CD8-positive, alpha-beta T cell (primary cell): ENCODE measurements at regions of chr6 and their contacts with region 1.

Region 1: DNA sequence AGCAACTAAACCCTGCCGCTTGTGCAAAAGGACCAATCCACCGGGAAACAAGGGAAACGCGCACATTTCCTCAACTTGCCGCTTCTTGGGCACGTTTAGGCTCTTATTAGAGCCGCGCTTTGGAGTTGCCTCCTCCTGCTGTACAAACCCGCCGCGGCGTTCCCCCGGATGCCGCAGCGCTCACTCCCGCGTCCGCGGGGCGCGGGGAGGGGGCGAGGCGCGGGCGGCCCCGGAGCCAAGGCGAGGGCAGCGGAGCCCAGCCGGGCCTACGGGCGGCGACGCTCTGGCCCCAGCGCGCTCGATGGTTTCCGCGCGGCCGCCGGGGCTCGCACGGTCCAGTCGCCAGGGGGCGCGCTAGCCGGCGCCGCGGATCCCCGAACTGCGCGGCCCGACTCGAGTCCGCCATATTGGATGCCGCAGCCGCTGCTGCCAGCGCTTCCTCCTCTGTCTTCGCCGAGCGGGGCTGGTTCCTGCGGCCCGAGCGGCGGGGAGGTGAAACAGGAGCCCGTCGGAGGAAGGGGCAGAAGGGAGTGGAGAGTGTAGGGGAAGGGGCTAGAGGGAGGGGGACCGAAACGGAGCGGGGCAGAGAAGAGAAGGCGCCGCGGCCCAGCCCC is at the start of gene SCAF8:
- DNase-seq: peak; percentile 75 to 94 (median 86)
- ATAC-seq: peak; percentile 60
- H3K4me3 ChIP-seq: peak within 1 kb of the TSS; percentile 63 to 84
- H3K4me3 Mint-ChIP-seq: peak within 1 kb of the TSS; percentile 87
- H3K27ac ChIP-seq: peak within 1 kb of the TSS; percentile 90 to 96
- H3K27ac Mint-ChIP-seq: peak within 1 kb of the TSS; percentile 98
- H3K4me1 ChIP-seq: peaks cover 43% of the 10 kb centered on the region
- H3K4me1 Mint-ChIP-seq: peaks cover 42% of the 10 kb centered on the region
- H3K27me3 ChIP-seq: no peaks in the 10 kb centered on the region
- H3K27me3 Mint-ChIP-seq: peaks cover 2% of the 10 kb centered on the region
- CTCF ChIP-seq: peak; percentile 80
- total RNA-seq, gene SCAF8: 85.0 to 86.6 TPM

Region 2: DNA sequence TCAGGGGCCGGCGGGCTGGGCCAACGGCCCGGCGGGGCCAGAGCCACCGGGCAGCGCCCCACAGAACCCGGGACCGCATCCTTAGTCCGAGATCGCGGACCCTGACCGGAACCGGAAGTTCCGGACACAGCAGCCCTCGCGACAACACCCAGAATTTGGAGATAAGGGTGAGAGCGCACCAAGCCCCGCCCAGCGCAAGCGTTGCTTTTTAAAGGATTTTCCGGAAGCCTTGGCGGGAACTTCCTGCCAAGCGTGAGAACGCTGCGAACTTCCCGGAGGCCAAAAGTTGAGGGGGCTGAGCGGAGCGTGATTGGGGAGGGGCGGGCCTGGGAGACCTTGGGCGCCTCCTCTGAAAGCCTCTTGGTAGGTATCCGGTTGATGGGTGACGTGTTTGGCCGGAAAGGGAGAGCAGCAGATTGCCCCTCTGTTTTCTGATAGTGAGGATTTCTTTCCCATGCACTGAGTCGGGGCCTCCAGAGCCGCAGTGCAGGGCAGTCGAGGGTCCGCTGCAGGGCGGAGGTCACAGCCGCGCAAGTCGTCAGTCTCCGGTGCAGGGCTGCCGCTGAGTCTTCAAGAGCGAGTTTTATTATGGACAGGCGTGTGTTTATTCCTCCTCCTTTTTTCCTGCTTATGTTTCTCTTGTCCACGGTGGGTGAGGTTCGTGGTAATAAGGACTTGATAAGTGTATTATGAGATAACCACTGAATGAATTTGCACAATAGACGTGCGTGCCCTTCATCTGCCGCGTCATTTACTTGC is 1730.3 kb before region 1 on chr6 and contains the start of gene MTRF1L:
- CTCF ChIA-PET with region 1: no interaction called
- POLR2A ChIA-PET with region 1: no interaction called
- intact Hi-C with region 1: loop called in 1 of 2 experiments (anchors 10 kb)
- DNase-seq: peak; percentile 58 to 94 (median 84)
- ATAC-seq: peak; percentile 85
- H3K4me3 ChIP-seq: peak within 1 kb of the TSS; percentile 60 to 69
- H3K4me3 Mint-ChIP-seq: peak within 1 kb of the TSS; percentile 97
- H3K27ac ChIP-seq: peak within 1 kb of the TSS; percentile 63 to 74
- H3K27ac Mint-ChIP-seq: peak within 1 kb of the TSS; percentile 96
- H3K4me1 ChIP-seq: peaks cover 26% of the 10 kb centered on the region
- H3K4me1 Mint-ChIP-seq: peaks cover 52% of the 10 kb centered on the region
- H3K27me3 ChIP-seq: no peaks in the 10 kb centered on the region
- H3K27me3 Mint-ChIP-seq: no peaks in the 10 kb centered on the region
- CTCF ChIP-seq: no peak
- total RNA-seq, gene MTRF1L: 10.5 to 13.4 TPM

Region 3: GRCh38 chr6:154247119-154247861 is 485.8 kb before region 1 on chr6:
- CTCF ChIA-PET with region 1: no interaction called
- POLR2A ChIA-PET with region 1: no interaction called
- intact Hi-C with region 1: loop called in 1 of 2 experiments (anchors 10 kb)
- DNase-seq: peak in 4 of 9 experiments; percentile 45 to 79 (median 60)
- ATAC-seq: peak; percentile 43
- H3K4me3 ChIP-seq: peak overlapping the region; percentile 60 to 69
- H3K4me3 Mint-ChIP-seq: peak overlapping the region; percentile 94
- H3K27ac ChIP-seq: peak overlapping the region; percentile 75 to 92
- H3K27ac Mint-ChIP-seq: peak overlapping the region; percentile 93
- H3K4me1 ChIP-seq: peaks cover 65% of the 10 kb centered on the region
- H3K4me1 Mint-ChIP-seq: peaks cover 83% of the 10 kb centered on the region
- H3K27me3 ChIP-seq: no peaks in the 10 kb centered on the region
- H3K27me3 Mint-ChIP-seq: no peaks in the 10 kb centered on the region
- CTCF ChIP-seq: no peak

Region 4: DNA sequence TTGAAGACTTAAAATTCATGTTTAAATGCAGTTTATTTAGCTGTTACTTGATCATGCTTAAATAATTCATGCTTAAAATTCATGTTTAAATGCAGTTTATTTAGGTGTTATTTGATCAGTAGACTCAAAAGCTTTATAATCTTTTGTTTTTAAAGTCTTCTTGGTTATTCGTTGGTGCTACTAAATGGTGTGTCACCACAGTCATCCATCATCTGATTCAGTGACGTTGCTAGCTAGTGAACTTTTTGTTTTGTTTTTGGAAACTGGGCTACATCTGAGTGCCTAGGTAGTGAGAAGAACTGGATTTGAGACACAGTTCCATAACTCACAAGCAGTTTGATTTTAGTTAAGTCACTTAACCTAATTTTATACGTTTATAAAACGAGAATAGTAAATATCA is 21.0 kb after region 1 on chr6:
- CTCF ChIA-PET with region 1: no interaction called
- POLR2A ChIA-PET with region 1: interaction called, 25 read pairs
- intact Hi-C with region 1: no loop called
- DNase-seq: peak in 1 of 9 experiments; percentile 36
- ATAC-seq: peak; percentile 29
- H3K4me3 ChIP-seq: no peak overlapping the region
- H3K4me3 Mint-ChIP-seq: no peak overlapping the region
- H3K27ac ChIP-seq: no peak overlapping the region
- H3K27ac Mint-ChIP-seq: peak overlapping the region; percentile 20
- H3K4me1 ChIP-seq: peaks cover 37% of the 10 kb centered on the region
- H3K4me1 Mint-ChIP-seq: peaks cover 81% of the 10 kb centered on the region
- H3K27me3 ChIP-seq: no peaks in the 10 kb centered on the region
- H3K27me3 Mint-ChIP-seq: no peaks in the 10 kb centered on the region
- CTCF ChIP-seq: no peak

Region 5: GRCh38 chr6:154805288-154805911 is 72.3 kb after region 1 on chr6:
- CTCF ChIA-PET with region 1: interaction called, 5 read pairs
- POLR2A ChIA-PET with region 1: no interaction called
- intact Hi-C with region 1: loop called (anchors 1 kb)
- DNase-seq: peak in 2 of 9 experiments; percentile 57 to 67
- ATAC-seq: peak; percentile 81
- H3K4me3 ChIP-seq: no peak overlapping the region
- H3K4me3 Mint-ChIP-seq: no peak overlapping the region
- H3K27ac ChIP-seq: no peak overlapping the region
- H3K27ac Mint-ChIP-seq: no peak overlapping the region
- H3K4me1 ChIP-seq: no peaks in the 10 kb centered on the region
- H3K4me1 Mint-ChIP-seq: peaks cover 3% of the 10 kb centered on the region
- H3K27me3 ChIP-seq: no peaks in the 10 kb centered on the region
- H3K27me3 Mint-ChIP-seq: no peaks in the 10 kb centered on the region
- CTCF ChIP-seq: peak; percentile 63